Activated naive CD4-positive, alpha-beta T cell treated with anti-CD3 and anti-CD28 coated beads for 36 hours (primary cell): ENCODE measurements at regions of chr10 and their contacts with region 1.

Region 1: DNA sequence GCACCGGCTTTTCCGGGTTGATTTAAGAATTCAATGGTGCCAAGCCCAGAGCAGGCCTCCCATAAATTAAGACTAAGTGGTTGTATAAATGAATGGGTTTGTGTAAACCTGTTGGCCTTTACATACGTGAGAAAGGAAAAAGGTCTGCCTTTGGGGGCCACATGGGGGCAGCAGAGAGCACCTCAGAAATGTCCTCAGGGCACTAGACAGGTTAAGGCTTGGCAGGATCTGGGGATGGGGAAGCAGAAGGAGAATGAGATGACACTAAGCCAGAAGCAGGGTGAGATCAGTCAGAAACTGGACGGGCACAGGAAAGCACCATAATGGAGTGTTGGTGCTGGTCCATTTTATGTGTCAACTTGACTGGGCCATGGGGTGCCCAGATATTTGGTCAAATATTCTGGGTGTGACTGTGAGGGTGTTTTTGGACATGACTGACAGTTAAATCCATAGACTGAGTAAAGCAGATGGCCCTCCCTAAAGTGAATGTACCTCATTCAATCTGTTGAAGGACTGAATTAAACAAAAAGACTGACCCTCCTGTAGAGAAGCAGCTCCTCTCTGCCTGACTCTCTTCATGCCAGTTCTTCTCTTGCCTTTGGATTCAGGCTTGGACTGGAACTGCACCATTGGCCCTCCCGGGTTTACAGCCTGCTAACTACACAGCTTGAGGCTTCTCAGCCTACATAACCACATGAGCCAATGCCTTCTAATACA is 58.9 kb downstream of the FRMPD2 start:
- DNase-seq: peak; percentile 62
- H3K4me3 Mint-ChIP-seq: no peak overlapping the region
- H3K27ac Mint-ChIP-seq: no peak overlapping the region
- H3K4me1 Mint-ChIP-seq: no peaks in the 10 kb centered on the region
- H3K27me3 Mint-ChIP-seq: peaks cover 7% of the 10 kb centered on the region

Region 2: DNA sequence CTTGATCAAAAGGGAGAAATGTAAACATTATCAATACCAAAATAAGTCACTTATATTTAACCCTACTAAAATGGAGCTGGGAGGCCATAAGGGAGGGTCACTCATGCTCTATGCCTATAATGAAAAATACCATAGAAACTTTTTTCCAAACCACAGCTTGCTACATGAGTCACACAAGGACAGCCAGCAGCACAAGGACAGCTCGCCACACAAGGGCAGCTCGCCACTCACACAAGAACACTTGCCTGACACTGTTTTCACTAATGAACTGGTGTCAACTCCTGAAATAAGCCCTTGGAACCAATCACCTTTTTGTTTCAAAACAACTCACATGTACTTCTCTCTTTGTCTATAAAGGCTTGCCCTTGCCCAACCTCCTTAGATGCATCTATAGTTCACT is 15.5 kb after region 1 on chr10:
- CTCF ChIA-PET with region 1: no interaction called
- intact Hi-C with region 1: no loop called
- DNase-seq: no peak
- H3K4me3 Mint-ChIP-seq: no peak overlapping the region
- H3K27ac Mint-ChIP-seq: no peak overlapping the region
- H3K4me1 Mint-ChIP-seq: no peaks in the 10 kb centered on the region
- H3K27me3 Mint-ChIP-seq: peaks cover 10% of the 10 kb centered on the region

Region 3: GRCh38 chr10:48289501-48290238 is 74.0 kb after region 1 on chr10:
- CTCF ChIA-PET with region 1: no interaction called
- intact Hi-C with region 1: loop called (anchors 2 kb)
- DNase-seq: peak; percentile 53
- H3K4me3 Mint-ChIP-seq: no peak overlapping the region
- H3K27ac Mint-ChIP-seq: no peak overlapping the region
- H3K4me1 Mint-ChIP-seq: peaks cover 4% of the 10 kb centered on the region
- H3K27me3 Mint-ChIP-seq: peaks cover 5% of the 10 kb centered on the region

Region 4: GRCh38 chr10:48384699-48384982 is 169.0 kb after region 1 on chr10:
- CTCF ChIA-PET with region 1: no interaction called
- intact Hi-C with region 1: no loop called
- DNase-seq: no peak
- H3K4me3 Mint-ChIP-seq: no peak overlapping the region
- H3K27ac Mint-ChIP-seq: no peak overlapping the region
- H3K4me1 Mint-ChIP-seq: peaks cover 17% of the 10 kb centered on the region
- H3K27me3 Mint-ChIP-seq: no peaks in the 10 kb centered on the region

Region 5: GRCh38 chr10:48506147-48506917 is 290.7 kb after region 1 on chr10:
- CTCF ChIA-PET with region 1: no interaction called
- intact Hi-C with region 1: loop called (anchors 5 kb)
- DNase-seq: peak; percentile 35
- H3K4me3 Mint-ChIP-seq: no peak overlapping the region
- H3K27ac Mint-ChIP-seq: no peak overlapping the region
- H3K4me1 Mint-ChIP-seq: no peaks in the 10 kb centered on the region
- H3K27me3 Mint-ChIP-seq: peaks cover under 1% of the 10 kb centered on the region